Right cardiac atrium (tissue), 5 donors: ENCODE measurements at regions of chr2 and their contacts with region 1.

Region 1: DNA sequence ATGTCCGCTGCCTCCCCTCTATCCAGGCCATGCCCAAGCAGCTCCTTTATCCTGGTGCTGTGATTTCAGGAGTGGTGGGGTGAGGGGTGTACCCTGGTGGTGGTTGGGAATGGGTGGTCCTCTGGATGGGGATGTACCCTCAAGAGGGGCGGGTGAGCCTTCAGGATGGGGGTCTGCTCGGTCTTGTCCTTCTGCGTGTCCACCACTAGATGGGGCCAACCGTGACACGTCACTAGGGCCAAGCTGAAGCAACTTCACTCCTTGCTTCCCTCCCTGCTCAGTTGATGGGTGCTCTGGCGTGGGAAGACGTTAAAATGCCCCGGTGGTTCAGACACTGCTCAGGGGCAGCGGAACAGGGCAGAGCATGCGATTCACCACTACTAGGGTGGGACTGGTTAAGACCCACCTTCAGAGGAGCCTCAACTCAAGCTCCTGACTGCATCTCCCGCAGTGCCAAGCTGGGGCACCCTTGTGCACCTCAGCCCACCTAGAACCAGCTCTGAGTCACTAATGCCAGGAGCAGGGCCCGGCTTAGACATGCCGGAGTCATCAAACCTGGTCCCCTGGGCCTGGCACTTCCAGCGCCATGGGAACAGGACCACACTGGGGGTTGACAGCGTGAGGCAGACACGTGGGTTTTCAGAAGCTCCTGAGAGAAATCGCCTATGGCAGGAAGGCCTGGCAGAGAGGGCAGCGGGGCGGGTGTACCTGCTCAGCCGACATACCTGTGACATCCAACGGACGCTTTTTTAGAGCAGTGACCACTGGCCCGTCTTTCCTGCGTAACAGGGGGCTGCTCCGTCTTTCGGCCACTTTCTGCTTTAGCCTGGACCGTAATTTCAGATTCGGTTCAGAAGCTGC is 256.7 kb downstream of the HDAC4 start:
- DNase-seq: peak in 1 of 3 donors; percentile 54
- ATAC-seq: peak; percentile 46 to 54
- H3K4me3 ChIP-seq: no peak overlapping the region
- H3K27ac ChIP-seq: no peak overlapping the region
- H3K4me1 ChIP-seq: no peaks in the 10 kb centered on the region
- H3K27me3 ChIP-seq: no peaks in the 10 kb centered on the region

Region 2: DNA sequence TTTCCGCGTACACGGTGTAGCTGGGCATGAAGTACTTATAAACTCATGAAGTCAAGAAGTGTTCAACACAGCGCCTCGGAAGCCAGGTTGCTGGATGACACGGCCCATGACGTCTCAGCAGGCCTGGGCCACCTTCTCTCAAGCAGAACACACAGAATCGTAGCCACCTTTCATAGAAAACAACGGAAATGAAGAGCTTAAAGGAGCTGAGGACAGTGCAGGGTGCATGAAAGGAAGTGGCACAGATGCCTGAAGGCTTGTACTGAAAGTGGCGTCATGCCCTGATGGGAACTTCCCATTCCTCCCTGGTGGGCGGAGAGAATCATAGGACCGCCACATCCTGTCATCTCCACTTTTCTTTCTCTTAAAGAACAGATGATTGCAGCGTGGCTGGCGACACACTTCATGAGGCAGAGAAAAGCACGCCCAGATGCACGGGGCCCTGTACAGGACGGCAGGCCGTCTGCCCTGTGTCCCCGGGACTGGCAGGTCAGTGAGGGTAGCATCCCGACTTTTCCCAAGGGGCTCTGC is 225.6 kb after region 1 on chr2:
- intact Hi-C with region 1: no loop called
- DNase-seq: no peak
- ATAC-seq: peak in 1 of 2 donors; percentile 16
- H3K4me3 ChIP-seq: no peak overlapping the region
- H3K27ac ChIP-seq: no peak overlapping the region
- H3K4me1 ChIP-seq: no peaks in the 10 kb centered on the region
- H3K27me3 ChIP-seq: no peaks in the 10 kb centered on the region

Region 3: DNA sequence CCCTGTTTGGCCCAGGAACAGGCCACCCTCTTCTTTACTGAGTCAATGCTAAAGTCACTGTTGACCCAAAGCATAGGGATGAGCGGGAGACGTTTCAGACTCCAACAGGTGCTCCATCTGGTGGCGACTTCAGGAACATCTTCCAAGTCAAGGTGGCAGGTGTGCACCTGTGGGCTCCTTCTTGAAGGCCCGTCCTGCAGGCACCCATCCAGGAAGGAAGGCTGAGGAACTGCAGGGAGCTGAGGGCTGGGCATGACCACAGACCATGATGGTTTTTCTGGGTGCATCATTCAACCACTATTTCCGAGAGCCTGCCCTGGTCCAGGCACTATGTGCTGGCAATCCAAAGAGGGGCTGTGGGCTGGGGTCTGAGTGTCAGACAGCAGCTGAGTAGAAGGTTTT is 738.2 kb after region 1 on chr2:
- intact Hi-C with region 1: loop called in 1 of 4 experiments (anchors 10 kb)
- DNase-seq: peak in 2 of 3 donors; percentile 63 to 75
- ATAC-seq: peak; percentile 68 to 74
- H3K4me3 ChIP-seq: no peak overlapping the region
- H3K27ac ChIP-seq: no peak overlapping the region
- H3K4me1 ChIP-seq: no peaks in the 10 kb centered on the region
- H3K27me3 ChIP-seq: no peaks in the 10 kb centered on the region